Activated B cell treated with CpG ODN at 0.5 μM for 24 hours (primary cell): ENCODE measurements at regions of chr1 and their contacts with region 1.

Region 1: DNA sequence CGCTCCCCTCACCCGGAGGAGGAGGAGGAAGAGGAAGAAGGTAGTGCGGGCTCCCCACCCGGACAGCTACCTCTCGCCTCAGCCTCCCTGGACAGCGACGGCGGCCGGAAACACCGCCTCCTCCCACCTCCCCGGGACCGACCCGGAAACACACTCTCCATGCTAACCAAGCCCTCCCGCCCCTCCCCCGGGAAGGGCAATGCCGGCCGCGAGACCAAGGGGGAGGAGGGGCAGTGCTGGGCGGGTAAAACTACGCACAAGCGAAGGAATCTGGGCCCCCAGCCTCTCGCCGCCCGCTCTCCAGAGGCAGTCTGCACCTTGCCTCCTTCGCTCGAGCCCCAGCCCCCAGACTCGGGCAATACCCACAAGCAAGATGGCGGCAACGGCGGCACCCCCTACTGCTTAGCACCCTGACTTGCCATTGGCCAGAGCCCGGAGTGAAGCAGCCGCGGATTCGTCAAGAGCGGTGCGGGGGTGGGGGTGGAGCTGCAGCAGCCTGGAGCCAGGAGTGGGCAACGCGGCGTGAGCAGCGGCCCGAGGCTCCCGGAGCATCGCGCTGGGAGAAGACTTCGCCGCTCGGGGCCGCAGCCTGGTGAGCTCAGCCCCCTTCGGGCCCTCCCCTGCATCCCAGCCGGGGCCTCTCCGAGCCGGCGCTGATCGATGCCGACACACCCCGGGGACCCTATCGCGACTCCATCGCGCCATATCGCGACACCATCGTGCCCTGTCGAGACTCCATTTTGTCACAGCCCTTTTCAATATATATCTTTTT is at the starts of genes KIAA0319L and NCDN:
- DNase-seq: peak; percentile 87
- ATAC-seq: peak; percentile 94
- H3K4me3 Mint-ChIP-seq: peak within 1 kb of the TSS; percentile 96
- H3K27ac Mint-ChIP-seq: peak within 1 kb of the TSS; percentile 96
- H3K4me1 Mint-ChIP-seq: peaks cover 32% of the 10 kb centered on the region
- H3K27me3 Mint-ChIP-seq: no peaks in the 10 kb centered on the region
- CTCF ChIP-seq: no peak
- total RNA-seq, gene KIAA0319L: 43.3 and 59.1 TPM in 2 replicates
- total RNA-seq, gene NCDN: 15.2 and 18.4 TPM in 2 replicates

Region 2: DNA sequence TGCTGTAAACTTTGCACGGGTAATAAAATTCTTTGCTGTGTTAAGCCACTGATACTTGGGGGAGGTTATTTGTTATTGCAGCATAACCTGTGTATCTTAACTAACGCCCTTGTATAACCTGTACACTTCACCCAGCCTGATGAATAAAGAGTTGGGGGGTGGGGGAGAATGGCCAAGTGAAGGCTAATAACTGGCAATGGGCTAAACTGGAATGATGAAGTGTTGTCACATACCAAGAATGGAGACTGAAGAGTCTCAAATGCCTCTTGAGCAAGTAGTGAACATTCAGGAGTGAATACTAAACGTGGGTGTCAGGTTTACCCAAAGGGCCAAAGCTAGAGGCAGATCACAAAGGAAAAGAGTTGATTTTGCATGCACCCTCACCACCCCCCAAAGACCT is 1211.3 kb before region 1 on chr1:
- CTCF ChIA-PET with region 1: no interaction called
- POLR2A ChIA-PET with region 1: no interaction called
- intact Hi-C with region 1: no loop called
- DNase-seq: no peak
- ATAC-seq: no peak
- H3K4me3 Mint-ChIP-seq: no peak overlapping the region
- H3K27ac Mint-ChIP-seq: no peak overlapping the region
- H3K4me1 Mint-ChIP-seq: no peaks in the 10 kb centered on the region
- H3K27me3 Mint-ChIP-seq: peaks cover 2% of the 10 kb centered on the region
- CTCF ChIP-seq: no peak

Region 3: GRCh38 chr1:34924759-34925555 is 632.5 kb before region 1 on chr1:
- CTCF ChIA-PET with region 1: no interaction called
- POLR2A ChIA-PET with region 1: interaction called, 10 read pairs
- intact Hi-C with region 1: no loop called
- DNase-seq: peak; percentile 32
- ATAC-seq: no peak
- H3K4me3 Mint-ChIP-seq: no peak overlapping the region
- H3K27ac Mint-ChIP-seq: no peak overlapping the region
- H3K4me1 Mint-ChIP-seq: peaks cover 32% of the 10 kb centered on the region
- H3K27me3 Mint-ChIP-seq: peaks cover 28% of the 10 kb centered on the region
- CTCF ChIP-seq: no peak

Region 4: DNA sequence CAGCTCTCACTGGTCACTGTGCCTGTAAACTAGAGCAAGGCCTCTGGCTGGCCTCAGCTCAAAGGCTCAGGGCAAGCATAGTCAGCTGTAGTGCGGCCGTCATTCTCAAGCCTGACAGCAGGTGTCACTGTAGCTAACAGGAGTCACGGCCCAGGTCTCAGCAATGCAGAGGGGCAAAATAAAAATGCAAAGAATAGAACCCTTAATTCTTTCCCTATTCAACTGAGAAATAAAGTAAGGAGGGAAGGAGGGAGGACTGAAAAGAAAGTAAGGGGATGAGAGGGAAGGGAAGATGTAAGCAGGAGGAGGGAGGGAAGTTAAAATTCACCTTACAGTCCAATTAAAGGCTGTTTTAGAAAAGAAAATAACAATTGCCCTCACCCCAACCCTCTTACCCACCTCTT is 106.4 kb before region 1 on chr1:
- CTCF ChIA-PET with region 1: interaction called, 20 read pairs
- POLR2A ChIA-PET with region 1: no interaction called
- intact Hi-C with region 1: loop called (anchors 2 kb)
- DNase-seq: peak; percentile 48
- ATAC-seq: peak; percentile 87
- H3K4me3 Mint-ChIP-seq: no peak overlapping the region
- H3K27ac Mint-ChIP-seq: no peak overlapping the region
- H3K4me1 Mint-ChIP-seq: no peaks in the 10 kb centered on the region
- H3K27me3 Mint-ChIP-seq: no peaks in the 10 kb centered on the region
- CTCF ChIP-seq: no peak

Region 5: DNA sequence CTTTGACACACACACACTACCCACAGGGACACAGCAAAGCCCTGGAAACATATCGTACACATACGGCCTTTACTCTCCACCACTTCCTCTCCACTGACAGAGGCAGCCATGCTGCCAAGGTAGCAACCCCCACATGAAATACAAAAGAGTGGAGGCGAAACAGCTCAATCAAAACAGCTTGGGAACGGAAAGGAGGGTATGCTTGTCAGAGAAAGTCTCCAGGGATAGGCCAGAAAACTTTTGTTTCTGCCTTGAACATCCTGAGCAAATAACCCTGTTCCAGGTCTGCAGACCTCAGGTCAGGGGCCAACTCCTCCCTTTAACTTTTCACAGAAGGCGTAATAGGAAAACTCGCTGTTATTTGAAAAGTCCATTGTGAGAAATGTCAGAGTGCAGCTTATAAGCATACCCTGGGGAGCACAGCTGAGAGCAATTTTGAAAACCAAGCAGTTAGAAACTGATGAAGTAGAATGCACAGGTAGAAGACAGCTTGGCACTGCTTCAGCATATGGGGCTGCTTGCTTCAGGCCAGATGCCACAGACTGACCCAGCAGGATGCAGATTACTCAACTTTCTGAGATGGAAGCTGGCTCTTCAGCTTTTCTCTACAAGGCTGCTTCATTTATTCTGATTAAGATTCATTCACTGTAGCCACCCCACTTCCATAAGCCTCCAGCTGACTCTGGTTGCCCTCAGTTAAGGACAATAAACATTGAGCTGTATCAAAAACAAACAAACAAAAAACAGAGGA is 18.2 kb before region 1 on chr1:
- CTCF ChIA-PET with region 1: no interaction called
- POLR2A ChIA-PET with region 1: interaction called, 8 read pairs
- intact Hi-C with region 1: loop called (anchors 2 kb)
- DNase-seq: no peak
- ATAC-seq: peak; percentile 49
- H3K4me3 Mint-ChIP-seq: peak overlapping the region; percentile 28
- H3K27ac Mint-ChIP-seq: peak overlapping the region; percentile 81
- H3K4me1 Mint-ChIP-seq: peaks cover 38% of the 10 kb centered on the region
- H3K27me3 Mint-ChIP-seq: no peaks in the 10 kb centered on the region
- CTCF ChIP-seq: no peak

Region 6: GRCh38 chr1:35577071-35577998 is 19.9 kb after region 1 on chr1:
- CTCF ChIA-PET with region 1: no interaction called
- POLR2A ChIA-PET with region 1: interaction called, 11 read pairs
- intact Hi-C with region 1: loop called (anchors 1 kb)
- DNase-seq: peak; percentile 60
- ATAC-seq: peak; percentile 84
- H3K4me3 Mint-ChIP-seq: peak overlapping the region; percentile 90
- H3K27ac Mint-ChIP-seq: peak overlapping the region; percentile 87
- H3K4me1 Mint-ChIP-seq: peaks cover 27% of the 10 kb centered on the region
- H3K27me3 Mint-ChIP-seq: peaks cover 13% of the 10 kb centered on the region
- CTCF ChIP-seq: no peak

Region 7: DNA sequence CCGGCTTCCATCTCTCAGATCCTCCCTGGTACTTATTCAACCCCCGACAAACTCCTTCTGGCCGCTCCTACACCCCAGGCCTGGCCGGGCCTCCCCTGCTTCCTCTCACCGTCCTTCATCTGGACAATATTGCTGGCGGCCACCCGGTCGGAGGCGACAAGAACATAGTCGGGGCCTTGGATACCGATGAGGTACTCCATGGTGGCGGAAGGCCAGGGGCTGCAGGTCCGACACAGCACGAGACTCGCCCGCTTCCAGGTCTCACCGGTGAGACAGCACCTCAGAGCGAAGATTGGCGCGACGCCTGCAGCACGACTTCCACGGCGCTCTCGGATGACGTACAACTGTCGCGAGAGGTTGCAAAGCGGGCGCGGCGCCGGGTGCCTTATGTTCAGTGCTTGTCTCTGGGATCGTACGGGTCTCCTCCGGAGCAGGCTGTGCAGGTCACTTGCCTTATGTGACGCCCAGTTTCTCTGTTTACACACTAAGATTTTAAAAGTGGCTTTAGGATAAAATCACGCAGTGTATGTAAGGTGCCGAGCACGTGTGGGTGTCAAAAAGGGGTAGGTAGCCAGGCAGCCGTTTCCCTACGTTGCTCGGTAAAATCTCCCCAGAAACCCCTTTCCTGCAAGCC is 83.9 kb after region 1 on chr1 and contains the start of gene PSMB2:
- CTCF ChIA-PET with region 1: no interaction called
- POLR2A ChIA-PET with region 1: no interaction called
- intact Hi-C with region 1: loop called (anchors 5 kb)
- DNase-seq: peak; percentile 92
- ATAC-seq: peak; percentile 93
- H3K4me3 Mint-ChIP-seq: peak within 1 kb of the TSS; percentile 100
- H3K27ac Mint-ChIP-seq: peak within 1 kb of the TSS; percentile 99
- H3K4me1 Mint-ChIP-seq: peaks cover 40% of the 10 kb centered on the region
- H3K27me3 Mint-ChIP-seq: peaks cover 16% of the 10 kb centered on the region
- CTCF ChIP-seq: no peak
- total RNA-seq, gene PSMB2: 54.5 and 56.3 TPM in 2 replicates